Pancreas (tissue), 10 donors: ENCODE measurements at regions of chr5 and their contacts with region 1.

Region 1: GRCh38 chr5:58849921-58850667 is 267.2 kb downstream of the RAB3C start:
- DNase-seq: peak; percentile 58 to 79 (median 72)
- ATAC-seq: peak; percentile 95 to 99 (median 97)
- H3K4me3 ChIP-seq: no peak overlapping the region
- H3K27ac ChIP-seq: no peak overlapping the region
- H3K4me1 ChIP-seq: peaks cover 0 to 5% (median 0%) of the 10 kb centered on the region in 3 donors
- H3K27me3 ChIP-seq: no peaks in the 10 kb centered on the region
- CTCF ChIP-seq: peak in 3 of 4 donors; percentile 27 to 33 (median 28)

Region 2: GRCh38 chr5:58498340-58498942 is 351.7 kb before region 1 on chr5:
- intact Hi-C with region 1: loop called in 2 of 3 experiments (anchors 10 kb)
- DNase-seq: peak in 4 of 6 donors; percentile 10 to 36 (median 22)
- ATAC-seq: peak in 3 of 4 donors; percentile 77 to 83 (median 80)
- H3K4me3 ChIP-seq: no peak overlapping the region
- H3K27ac ChIP-seq: no peak overlapping the region
- H3K4me1 ChIP-seq: peaks cover 0 to 6% (median 0%) of the 10 kb centered on the region in 3 donors
- H3K27me3 ChIP-seq: no peaks in the 10 kb centered on the region
- CTCF ChIP-seq: peak; percentile 45 to 67 (median 56)

Region 3: DNA sequence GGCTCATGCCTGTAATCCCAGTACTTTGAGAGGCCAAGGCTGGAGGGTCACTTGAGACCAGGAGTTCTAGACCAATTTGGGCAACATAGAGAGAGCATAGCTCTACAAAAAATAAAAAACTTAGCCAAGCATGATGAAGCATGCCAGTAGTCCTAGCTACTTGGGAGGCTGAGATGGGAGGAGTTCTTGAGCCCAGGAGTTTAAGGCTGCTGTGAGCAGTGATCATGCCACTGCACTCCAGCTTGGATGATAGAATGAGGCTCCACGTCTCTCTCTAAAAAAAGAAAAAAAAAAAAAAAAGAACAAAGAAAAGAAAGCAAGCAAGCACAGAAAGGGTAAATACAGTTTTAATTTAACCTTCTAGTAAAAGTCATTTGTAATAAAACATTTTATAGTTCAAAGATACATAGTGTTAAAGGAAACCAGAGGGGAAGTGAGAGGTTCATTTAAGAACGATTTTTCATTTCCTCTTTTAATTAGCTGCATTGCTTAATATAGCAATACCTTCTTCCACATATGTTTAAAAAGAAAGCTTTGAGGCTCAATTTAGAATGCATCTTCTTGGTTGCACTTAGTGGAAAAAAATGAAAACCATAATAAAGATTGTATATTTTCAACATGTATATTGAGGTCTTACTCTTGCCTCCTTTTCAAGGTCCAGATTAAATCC is 344.0 kb before region 1 on chr5:
- intact Hi-C with region 1: loop called in 1 of 3 experiments (anchors 10 kb)
- DNase-seq: no peak
- ATAC-seq: no peak
- H3K4me3 ChIP-seq: no peak overlapping the region
- H3K27ac ChIP-seq: no peak overlapping the region
- H3K4me1 ChIP-seq: no peaks in the 10 kb centered on the region
- H3K27me3 ChIP-seq: no peaks in the 10 kb centered on the region
- CTCF ChIP-seq: no peak

Region 4: GRCh38 chr5:58902765-58903164 is 52.7 kb after region 1 on chr5:
- intact Hi-C with region 1: no loop called
- DNase-seq: no peak
- ATAC-seq: peak in 2 of 4 donors; percentile 26 to 56
- H3K4me3 ChIP-seq: no peak overlapping the region
- H3K27ac ChIP-seq: no peak overlapping the region
- H3K4me1 ChIP-seq: no peaks in the 10 kb centered on the region
- H3K27me3 ChIP-seq: no peaks in the 10 kb centered on the region
- CTCF ChIP-seq: no peak